Mammary epithelial cell (primary cell): ENCODE measurements at regions of chr6 and their contacts with region 1.

Region 1: GRCh38 chr6:73285674-73286283 is 22.8 kb upstream of the KHDC1 start:
- DNase-seq: peak; percentile 30
- H3K4me3 ChIP-seq: no peak overlapping the region
- H3K27ac ChIP-seq: no peak overlapping the region
- H3K4me1 ChIP-seq: no peaks in the 10 kb centered on the region
- H3K27me3 ChIP-seq: no peaks in the 10 kb centered on the region
- CTCF ChIP-seq: peak; percentile 29 to 47

Region 2: GRCh38 chr6:73394577-73395354 is 109.0 kb after region 1 on chr6 and contains the start of gene DDX43:
- CTCF ChIA-PET with region 1: no interaction called
- dilution Hi-C with region 1: no loop called
- in situ Hi-C with region 1: no loop called
- intact Hi-C with region 1: no loop called
- DNase-seq: no peak
- H3K4me3 ChIP-seq: no peak within 1 kb of the TSS
- H3K27ac ChIP-seq: no peak within 1 kb of the TSS
- H3K4me1 ChIP-seq: no peaks in the 10 kb centered on the region
- H3K27me3 ChIP-seq: no peaks in the 10 kb centered on the region
- CTCF ChIP-seq: no peak
- total RNA-seq, gene DDX43: 0.50 TPM in 1 of 2 donors, not detected in the other

Region 3: GRCh38 chr6:73566954-73567591 is 281.3 kb after region 1 on chr6:
- CTCF ChIA-PET with region 1: no interaction called
- dilution Hi-C with region 1: no loop called
- in situ Hi-C with region 1: no loop called
- intact Hi-C with region 1: no loop called
- DNase-seq: peak; percentile 24
- H3K4me3 ChIP-seq: no peak overlapping the region
- H3K27ac ChIP-seq: no peak overlapping the region
- H3K4me1 ChIP-seq: peaks cover 16% of the 10 kb centered on the region
- H3K27me3 ChIP-seq: no peaks in the 10 kb centered on the region
- CTCF ChIP-seq: no peak

Region 4: DNA sequence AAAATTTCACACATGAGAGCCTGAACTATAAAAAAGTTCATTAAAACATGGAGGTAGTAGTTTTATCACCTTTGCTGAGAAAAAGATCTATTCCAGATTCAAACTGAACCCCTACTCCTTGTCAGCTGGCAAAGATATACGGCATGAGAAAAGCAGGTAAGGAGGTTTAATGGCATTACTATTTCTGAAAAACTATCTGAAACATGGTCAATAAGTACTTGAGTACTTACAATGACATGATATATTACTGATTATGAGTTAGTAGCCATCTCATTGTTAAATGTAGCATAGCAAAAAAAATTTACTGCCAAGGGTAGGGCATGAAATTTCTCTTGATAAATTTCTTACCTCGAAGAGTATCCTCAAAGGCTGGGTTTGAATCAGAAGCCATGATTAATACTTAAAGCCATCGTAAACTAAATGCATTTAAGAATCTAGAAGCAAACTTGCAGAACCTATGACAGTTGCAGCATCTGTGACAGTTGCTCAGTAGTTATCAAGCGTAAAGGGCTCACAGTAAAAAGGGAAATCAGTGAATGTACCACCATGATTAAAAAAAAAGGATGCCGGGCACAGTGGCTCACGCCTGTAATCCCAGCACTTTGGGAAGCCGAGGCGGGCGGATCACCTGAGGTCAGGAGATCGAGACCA is 359.3 kb after region 1 on chr6:
- CTCF ChIA-PET with region 1: no interaction called
- dilution Hi-C with region 1: no loop called
- in situ Hi-C with region 1: loop called in 1 of 2 experiments (anchors 25 kb)
- intact Hi-C with region 1: no loop called
- DNase-seq: no peak
- H3K4me3 ChIP-seq: peak overlapping the region in 2 of 3 experiments; percentile 51 to 60
- H3K27ac ChIP-seq: no peak overlapping the region
- H3K4me1 ChIP-seq: peaks cover 11% of the 10 kb centered on the region
- H3K27me3 ChIP-seq: no peaks in the 10 kb centered on the region
- CTCF ChIP-seq: no peak

Region 5: DNA sequence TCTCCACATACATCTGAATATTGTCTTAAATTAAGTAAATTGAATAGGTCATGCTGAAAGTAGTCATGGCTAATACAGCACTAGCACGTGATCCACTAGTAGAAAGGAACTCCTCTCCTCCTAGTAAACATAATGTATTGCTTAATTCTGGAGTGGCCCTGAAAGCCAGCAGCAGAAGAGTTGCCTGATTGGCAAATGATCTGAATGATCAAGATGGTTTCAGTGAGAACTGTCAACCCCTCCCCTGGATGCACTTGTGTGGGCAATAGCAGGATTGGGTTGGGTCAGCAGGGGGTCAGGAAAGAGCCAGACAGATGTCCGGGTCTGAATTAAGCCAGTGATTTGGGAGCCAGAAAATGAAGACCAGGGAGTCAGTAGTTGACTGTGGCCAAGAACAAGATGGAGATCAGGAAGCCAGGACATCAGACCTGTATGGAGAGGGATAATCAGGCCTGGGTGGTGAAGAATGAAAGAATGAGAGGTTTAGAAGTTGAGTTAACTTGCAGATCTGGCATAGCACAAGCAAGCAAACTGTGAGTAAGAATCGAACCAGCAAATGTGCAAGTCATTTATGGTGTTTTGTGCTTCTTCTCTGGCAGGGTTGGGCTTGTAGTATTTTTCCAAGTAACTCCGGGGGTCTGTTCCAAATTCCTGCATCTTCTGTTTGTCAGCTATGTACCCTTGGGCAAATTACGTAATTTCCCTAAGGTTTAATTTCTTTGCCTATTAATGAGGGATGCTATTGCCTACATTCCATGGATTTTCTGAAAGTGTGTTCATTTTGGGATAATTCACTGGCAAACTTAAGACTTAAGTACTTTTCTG is 715.1 kb after region 1 on chr6:
- CTCF ChIA-PET with region 1: no interaction called
- dilution Hi-C with region 1: no loop called
- in situ Hi-C with region 1: no loop called
- intact Hi-C with region 1: no loop called
- DNase-seq: peak; percentile 17
- H3K4me3 ChIP-seq: no peak overlapping the region
- H3K27ac ChIP-seq: no peak overlapping the region
- H3K4me1 ChIP-seq: no peaks in the 10 kb centered on the region
- H3K27me3 ChIP-seq: no peaks in the 10 kb centered on the region
- CTCF ChIP-seq: no peak